A549 (cell line): ENCODE measurements at regions of chr10 and their contacts with region 1.

Region 1: DNA sequence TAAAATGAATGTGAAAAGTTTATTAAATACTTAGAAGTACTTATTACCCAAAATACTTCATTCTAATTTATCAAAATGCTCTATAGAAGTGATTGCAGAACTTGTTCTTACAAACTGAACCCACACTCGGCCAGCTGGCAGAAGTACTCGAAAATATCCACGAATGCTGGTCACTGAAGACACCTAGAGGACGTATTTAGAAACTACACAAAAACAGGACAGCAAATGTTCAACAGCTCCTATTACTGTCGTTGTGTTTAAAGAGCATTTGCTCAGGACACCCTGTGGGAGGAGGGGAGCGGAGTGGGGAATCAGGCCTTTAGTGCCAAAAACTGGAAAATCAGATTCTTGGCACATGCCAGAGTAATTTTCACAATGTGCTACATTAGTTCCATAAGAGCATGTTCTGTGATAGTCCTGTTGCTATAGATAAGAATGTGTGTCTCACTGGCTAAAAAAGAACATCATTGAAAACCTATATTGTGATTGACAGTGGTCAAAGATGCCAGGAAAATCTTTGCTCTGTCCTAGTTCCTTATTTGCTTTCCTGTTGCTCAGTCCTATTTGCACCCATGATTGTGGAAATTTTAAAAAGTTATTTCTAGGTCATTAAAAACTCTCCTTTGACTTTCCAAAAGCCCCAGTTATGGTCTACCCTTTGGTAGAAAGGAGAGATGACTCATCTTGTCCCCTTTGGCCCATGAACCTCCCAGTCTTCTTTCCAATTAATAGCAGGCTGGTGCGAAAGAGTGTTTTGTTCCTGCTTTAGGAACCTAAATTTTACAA is 49.0 kb upstream of the NRBF2 start:
- DNase-seq: peak; percentile 41 to 75
- ATAC-seq: peak; percentile 93 to 97
- H3K4me3 ChIP-seq: no peak overlapping the region
- H3K27ac ChIP-seq: no peak overlapping the region
- H3K4me1 ChIP-seq: no peaks in the 10 kb centered on the region
- CTCF ChIP-seq: peak; percentile 75
- EP300 ChIP-seq: no peak
- POLR2A ChIP-seq: no peak
- RAD21 ChIP-seq: peak; percentile 83 to 85

Region 2: DNA sequence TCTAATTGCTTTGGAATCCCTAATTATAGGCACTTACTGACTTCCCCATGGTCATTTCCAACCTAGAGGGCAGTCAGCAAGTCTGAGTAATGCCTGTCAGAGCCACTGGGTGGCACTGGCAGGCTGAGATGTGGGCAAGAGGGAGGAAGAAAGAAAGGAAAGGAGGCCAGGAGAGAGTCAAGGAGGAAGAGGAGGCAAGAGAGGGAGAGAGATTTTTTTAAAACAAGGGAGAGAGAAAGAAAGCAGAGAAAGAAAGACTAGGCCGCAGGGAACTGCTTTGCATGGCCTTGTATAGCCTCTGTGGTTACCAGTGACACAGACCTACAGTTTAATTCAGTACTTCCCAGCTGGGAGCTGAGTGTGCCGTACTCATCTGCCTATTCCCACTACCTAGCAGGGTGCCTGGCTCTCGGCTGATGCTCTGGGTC is 490.0 kb before region 1 on chr10:
- CTCF ChIA-PET with region 1: interaction called, 15 read pairs
- POLR2A ChIA-PET with region 1: no interaction called
- DNase-seq: peak; percentile 26 to 58
- ATAC-seq: peak; percentile 94 to 98
- H3K4me3 ChIP-seq: no peak overlapping the region
- H3K27ac ChIP-seq: no peak overlapping the region
- H3K4me1 ChIP-seq: no peaks in the 10 kb centered on the region
- CTCF ChIP-seq: peak; percentile 84
- EP300 ChIP-seq: no peak
- POLR2A ChIP-seq: no peak
- RAD21 ChIP-seq: peak; percentile 88 to 96

Region 3: DNA sequence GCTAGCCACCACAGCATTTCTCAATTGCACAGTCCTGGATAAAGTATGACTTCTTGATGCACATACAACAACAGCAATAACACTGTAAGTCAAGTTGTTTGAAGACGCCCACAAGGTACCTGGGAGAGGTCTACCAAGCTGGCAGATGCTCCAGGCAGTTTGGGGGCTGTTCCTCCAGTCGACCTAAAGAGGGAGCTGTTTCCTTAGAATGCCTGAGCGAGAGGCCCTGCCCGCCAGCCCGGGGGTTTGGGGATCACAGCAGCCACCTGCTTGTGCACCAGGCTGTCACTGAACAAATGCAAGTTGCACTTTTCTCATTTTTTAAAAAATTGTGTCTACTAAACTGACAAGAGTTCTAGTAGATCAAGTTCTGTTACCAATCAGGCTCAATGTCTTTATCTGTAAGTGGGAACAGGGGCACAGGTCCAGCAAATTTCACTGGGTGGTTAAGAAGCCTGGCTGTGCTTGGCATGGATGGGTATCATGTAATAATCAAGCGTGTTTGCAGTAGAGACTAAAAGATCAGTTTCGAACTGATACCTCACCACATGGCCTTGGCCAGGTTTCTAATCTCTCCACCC is 473.4 kb before region 1 on chr10:
- CTCF ChIA-PET with region 1: interaction called, 12 read pairs
- POLR2A ChIA-PET with region 1: no interaction called
- DNase-seq: peak; percentile 35 to 53
- ATAC-seq: peak; percentile 66 to 89; a peak in 5 of 6 replicates
- H3K4me3 ChIP-seq: no peak overlapping the region
- H3K27ac ChIP-seq: no peak overlapping the region
- H3K4me1 ChIP-seq: peaks cover 17% of the 10 kb centered on the region; the same call in 2 of the 3 replicates
- CTCF ChIP-seq: peak; percentile 44
- EP300 ChIP-seq: no peak
- POLR2A ChIP-seq: no peak
- RAD21 ChIP-seq: peak; percentile 70 to 81

Region 4: DNA sequence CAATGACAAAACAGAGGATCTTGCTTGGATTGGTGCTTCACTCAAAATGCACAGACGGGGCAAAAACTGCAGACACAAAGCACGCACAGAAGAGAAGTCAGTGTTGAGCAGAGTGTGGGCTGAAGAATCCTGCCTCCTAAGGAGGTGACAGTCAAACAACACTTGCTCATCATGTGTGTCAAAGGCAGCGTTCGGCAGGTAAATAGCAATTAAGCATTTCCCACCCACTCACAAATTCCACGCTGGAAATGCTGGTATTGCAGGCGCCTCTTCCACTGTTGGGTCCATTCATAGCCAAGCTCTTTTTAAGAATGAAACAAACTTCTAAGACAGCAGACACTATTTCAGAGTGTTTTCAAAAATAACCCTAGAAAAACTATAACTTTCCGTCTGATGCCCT is 10.2 kb before region 1 on chr10:
- CTCF ChIA-PET with region 1: interaction called, 15 read pairs
- POLR2A ChIA-PET with region 1: no interaction called
- DNase-seq: no peak
- ATAC-seq: no peak
- H3K4me3 ChIP-seq: no peak overlapping the region
- H3K27ac ChIP-seq: no peak overlapping the region
- H3K4me1 ChIP-seq: no peaks in the 10 kb centered on the region
- CTCF ChIP-seq: no peak
- EP300 ChIP-seq: no peak
- POLR2A ChIP-seq: no peak
- RAD21 ChIP-seq: no peak

Region 5: GRCh38 chr10:63103971-63104409 is 19.9 kb after region 1 on chr10:
- CTCF ChIA-PET with region 1: interaction called, 13 read pairs
- POLR2A ChIA-PET with region 1: no interaction called
- DNase-seq: no peak
- ATAC-seq: no peak
- H3K4me3 ChIP-seq: no peak overlapping the region
- H3K27ac ChIP-seq: no peak overlapping the region
- H3K4me1 ChIP-seq: no peaks in the 10 kb centered on the region
- CTCF ChIP-seq: no peak
- EP300 ChIP-seq: no peak
- POLR2A ChIP-seq: no peak
- RAD21 ChIP-seq: no peak